ENCODE measurements at regions of chr19 and their contacts with region 1.

Region 1: GRCh38 chr19:40305403-40305802 is 20.3 kb upstream of the AKT2 start:
- H3K4me3 ChIP-seq: no peak overlapping the region
- H3K27ac ChIP-seq: no peak overlapping the region
- H3K4me1 ChIP-seq: peaks cover 13% of the 10 kb centered on the region
- CTCF ChIP-seq: peak; percentile 87; the same call in 1 of the 2 replicates

Region 2: GRCh38 chr19:40139533-40140287 is 165.7 kb before region 1 on chr19:
- CTCF ChIA-PET with region 1: interaction called, 13 read pairs
- POLR2A ChIA-PET with region 1: no interaction called
- H3K4me3 ChIP-seq: no peak overlapping the region
- H3K27ac ChIP-seq: no peak overlapping the region
- H3K4me1 ChIP-seq: no peaks in the 10 kb centered on the region
- CTCF ChIP-seq: peak; percentile 89

Region 3: DNA sequence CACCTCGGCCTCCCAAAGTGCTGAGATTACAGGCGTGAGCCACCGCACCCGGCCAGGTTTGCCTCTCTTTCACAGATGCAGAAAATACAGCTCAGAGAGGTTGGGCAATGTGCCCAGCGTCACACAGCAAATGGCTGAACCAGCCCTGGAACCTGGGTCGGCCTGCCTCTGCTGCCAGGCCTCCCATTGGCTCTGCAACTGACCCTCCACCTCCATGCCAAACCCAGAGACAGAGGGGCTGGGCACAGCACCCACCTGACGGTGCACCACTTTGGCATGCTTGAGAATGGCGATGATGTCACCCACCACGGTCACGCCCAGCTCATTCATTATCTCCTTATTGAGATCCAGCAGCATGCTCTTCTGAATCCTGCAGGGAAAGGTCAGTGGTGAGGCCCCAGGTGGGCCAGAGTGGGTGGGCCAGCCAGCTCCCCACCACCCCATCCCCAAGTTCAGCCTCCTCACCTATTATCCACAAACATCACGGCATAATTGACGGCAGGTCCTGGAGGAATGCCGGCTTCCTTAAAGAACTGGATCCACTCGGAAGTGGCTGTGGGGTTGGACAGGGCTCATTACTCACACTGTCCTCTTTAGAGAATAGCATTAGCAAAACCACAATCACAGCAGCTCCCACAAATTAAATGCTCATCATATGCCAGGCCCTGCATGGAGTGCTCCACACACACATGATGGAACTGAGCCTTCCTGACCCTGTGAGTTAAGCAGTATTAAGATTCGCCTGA is 30.6 kb after region 1 on chr19:
- CTCF ChIA-PET with region 1: interaction called, 16 read pairs
- POLR2A ChIA-PET with region 1: interaction called, 3 read pairs
- H3K4me3 ChIP-seq: no peak overlapping the region
- H3K27ac ChIP-seq: peak overlapping the region; percentile 29; the same call in 1 of the 2 replicates
- H3K4me1 ChIP-seq: no peaks in the 10 kb centered on the region
- CTCF ChIP-seq: no peak

Region 4: GRCh38 chr19:40395591-40396355 is 90.4 kb after region 1 on chr19:
- CTCF ChIA-PET with region 1: interaction called, 10 read pairs
- POLR2A ChIA-PET with region 1: no interaction called
- H3K4me3 ChIP-seq: no peak overlapping the region
- H3K27ac ChIP-seq: no peak overlapping the region
- H3K4me1 ChIP-seq: no peaks in the 10 kb centered on the region
- CTCF ChIP-seq: no peak

Region 5: DNA sequence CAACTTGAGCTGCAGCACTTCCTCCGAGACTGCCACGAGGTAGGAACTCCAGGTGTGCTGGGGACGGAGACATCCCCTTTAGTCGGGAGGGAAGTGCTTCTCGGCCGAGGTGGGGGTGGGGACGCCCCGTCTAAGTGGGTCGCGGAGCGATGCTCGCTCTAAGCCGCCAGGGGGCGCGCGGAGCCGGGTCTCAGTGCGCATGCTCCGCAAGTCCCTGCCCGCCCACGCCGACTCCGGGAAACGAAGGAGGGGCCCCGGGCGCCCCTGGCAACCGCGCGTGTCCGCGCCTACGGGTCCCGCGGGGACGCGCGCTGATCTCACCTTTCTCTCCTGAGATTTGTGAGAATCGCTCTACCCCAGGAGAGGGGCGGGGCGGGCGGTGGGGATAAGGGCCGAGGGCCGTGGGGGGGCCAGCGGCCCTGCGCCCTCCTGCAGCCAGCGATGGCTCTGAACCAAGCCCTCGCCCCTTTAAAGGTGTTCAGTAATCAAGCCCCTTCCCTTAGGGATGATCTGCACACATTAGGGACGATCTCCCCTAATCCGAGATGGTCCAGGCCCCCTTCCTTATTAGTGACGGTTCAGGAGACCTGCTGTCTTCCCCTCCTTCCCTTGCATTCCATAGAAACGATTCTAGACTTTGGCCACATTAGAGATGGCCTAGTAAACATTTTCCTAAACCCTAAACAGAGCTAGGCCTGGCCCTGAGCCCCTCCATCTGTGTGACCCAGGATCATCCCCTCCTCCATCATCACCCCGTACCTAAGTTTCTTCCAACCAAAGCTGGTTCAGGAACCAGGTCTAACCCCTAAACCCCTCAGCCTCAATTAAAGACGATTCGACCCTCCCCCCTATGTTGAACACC is 223.9 kb after region 1 on chr19:
- CTCF ChIA-PET with region 1: interaction called, 10 read pairs
- POLR2A ChIA-PET with region 1: no interaction called
- H3K4me3 ChIP-seq: peak overlapping the region; percentile 19
- H3K27ac ChIP-seq: peak overlapping the region; percentile 39
- H3K4me1 ChIP-seq: peaks cover 17% of the 10 kb centered on the region
- CTCF ChIP-seq: peak; percentile 100

Region 6: DNA sequence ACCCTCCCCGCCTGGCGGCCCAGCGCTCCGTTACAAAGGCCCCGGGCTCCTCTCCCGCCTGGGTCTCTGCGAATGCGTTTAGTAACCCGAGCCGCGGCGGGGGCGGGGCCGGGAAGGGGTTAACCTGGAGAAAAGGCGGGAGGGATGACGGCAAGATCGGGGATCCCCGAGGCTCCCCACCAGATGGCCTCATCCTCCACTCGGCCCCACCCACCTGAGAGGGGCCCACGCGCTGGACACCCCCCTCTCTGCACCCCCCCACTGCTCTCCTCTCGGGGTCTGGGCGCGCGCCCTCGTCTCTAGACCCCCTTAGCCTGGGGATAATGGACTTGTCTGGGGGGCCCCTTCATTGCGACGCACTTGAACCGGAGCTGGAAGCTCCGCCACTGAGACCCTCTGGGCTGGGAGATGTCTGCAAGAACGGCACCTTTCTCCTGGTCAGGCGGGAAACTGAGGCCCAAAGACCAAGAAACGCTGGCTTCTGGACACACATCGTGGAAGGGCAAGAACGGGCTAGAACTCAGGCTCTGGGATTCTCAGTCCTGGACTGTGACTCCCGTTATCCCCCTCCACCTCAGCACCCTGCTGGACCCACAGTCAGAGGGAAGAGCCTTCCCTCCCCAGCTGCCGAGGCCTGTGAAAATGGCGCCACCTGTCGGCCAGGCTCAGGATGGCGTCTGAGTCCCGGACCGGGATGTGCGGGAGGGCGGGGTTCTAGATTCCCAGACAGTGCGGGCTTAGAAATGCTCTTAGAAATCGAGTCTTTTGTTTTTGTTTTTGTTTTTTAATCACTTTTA is 292.9 kb after region 1 on chr19:
- CTCF ChIA-PET with region 1: interaction called, 19 read pairs
- POLR2A ChIA-PET with region 1: interaction called, 3 read pairs
- H3K4me3 ChIP-seq: peak overlapping the region; percentile 33
- H3K27ac ChIP-seq: peak overlapping the region; percentile 60; the same call in 1 of the 2 replicates
- H3K4me1 ChIP-seq: peaks cover 57% of the 10 kb centered on the region
- CTCF ChIP-seq: peak; percentile 99

Region 7: GRCh38 chr19:40785526-40785925 is 480.1 kb after region 1 on chr19:
- CTCF ChIA-PET with region 1: no interaction called
- POLR2A ChIA-PET with region 1: no interaction called
- H3K4me3 ChIP-seq: no peak overlapping the region
- H3K27ac ChIP-seq: no peak overlapping the region
- H3K4me1 ChIP-seq: no peaks in the 10 kb centered on the region
- CTCF ChIP-seq: peak; percentile 49